Thyroid gland (tissue), 4 donors: ENCODE measurements at regions of chr1 and their contacts with region 1.

Region 1: DNA sequence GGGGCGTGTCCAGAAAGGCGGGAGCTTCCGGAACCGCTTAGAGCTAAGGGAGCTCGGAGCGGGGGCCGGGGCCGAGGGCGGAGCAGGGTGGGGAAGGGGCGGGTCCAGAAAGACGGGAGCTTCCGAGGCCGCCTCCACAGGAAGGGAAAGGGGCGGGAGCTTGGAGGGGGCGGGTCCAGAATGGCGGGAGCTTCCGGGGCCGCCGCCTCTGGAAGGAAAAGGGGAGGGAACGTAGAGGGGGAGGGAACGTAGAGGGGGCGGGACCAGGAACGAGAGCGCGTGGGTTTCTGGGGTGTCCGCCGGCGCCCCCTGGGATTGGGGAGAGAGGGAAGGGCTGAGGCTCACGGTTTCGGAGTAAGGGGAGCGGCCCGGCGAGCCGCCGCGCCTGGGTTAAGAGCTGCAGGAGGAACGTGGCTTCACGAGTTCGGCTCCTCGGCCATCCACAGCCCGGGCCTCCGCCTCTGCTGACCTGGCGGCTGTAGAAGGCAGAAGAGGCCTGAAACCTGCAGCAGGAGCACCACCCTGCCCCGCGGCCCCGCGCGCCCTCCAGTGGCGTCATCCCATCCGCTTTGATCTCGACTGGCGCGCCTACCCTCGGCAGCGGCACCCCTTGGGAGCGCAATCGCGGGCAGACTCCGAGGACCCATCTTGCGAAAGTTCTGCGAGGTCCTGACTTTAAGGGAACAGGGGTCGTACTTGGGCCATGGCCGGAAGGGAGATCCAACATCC is 22.9 kb upstream of the HPDL start:
- DNase-seq: peak; percentile 99
- H3K4me3 ChIP-seq: peak overlapping the region; percentile 16 to 49 (median 47)
- H3K27ac ChIP-seq: peak overlapping the region; percentile 85 to 88 (median 86)
- H3K4me1 ChIP-seq: peaks cover 8 to 15% of the 10 kb centered on the region in 2 donors
- H3K27me3 ChIP-seq: no peaks in the 10 kb centered on the region
- CTCF ChIP-seq: peak; percentile 22 to 77 (median 64)
- POLR2A ChIP-seq: peak in 1 of 2 donors; percentile 77

Region 2: DNA sequence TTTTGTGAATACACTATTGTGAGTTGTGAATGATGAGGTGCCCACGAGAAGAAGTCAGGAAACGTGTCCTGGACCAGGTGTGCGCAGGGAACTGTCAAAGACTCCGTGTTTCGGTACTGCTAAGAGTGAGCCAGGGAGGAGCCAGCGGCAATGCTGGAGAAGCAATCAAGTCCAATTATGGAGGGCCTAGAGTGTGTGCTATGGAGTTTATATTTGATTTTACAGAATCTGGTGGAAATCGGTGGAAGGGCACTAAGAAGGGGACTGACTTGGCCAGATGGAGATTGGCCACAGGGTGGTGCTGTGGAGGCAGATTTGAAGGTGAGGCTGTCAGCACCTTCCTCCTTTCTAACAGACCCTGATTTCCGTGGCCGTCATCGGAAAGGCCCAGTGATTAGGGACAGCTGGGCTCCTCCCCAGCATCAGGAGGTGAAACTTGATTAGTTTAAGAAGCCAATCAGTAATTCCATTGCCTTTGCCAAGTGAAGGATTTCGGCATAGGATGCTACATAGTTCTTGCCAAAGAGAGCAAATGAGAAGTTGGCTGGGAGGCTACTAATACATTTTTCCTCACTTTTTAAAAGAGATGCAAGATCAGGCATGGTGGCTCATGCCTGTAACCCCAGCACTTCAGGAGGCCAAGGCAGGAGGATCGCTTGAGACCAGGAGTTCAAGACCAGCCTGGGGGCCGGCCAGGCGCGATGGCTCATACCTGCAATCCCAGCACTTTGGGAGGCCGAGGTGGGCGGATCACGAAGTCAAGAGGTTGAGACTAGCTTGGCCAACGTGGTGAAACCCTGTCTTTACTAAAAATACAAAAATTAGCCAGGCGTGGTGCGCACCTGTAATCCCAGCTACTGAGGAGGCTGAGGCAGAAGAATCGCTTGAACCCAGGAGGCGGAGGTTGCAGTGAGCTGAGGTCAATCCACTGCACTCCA is 467.7 kb before region 1 on chr1:
- intact Hi-C with region 1: loop called (anchors 5 kb)
- DNase-seq: peak; percentile 85 to 91
- H3K4me3 ChIP-seq: no peak overlapping the region
- H3K27ac ChIP-seq: no peak overlapping the region
- H3K4me1 ChIP-seq: peaks cover 0 to 4% of the 10 kb centered on the region in 2 donors
- H3K27me3 ChIP-seq: no peaks in the 10 kb centered on the region
- CTCF ChIP-seq: peak; percentile 43 to 86 (median 79)
- POLR2A ChIP-seq: no peak

Region 3: DNA sequence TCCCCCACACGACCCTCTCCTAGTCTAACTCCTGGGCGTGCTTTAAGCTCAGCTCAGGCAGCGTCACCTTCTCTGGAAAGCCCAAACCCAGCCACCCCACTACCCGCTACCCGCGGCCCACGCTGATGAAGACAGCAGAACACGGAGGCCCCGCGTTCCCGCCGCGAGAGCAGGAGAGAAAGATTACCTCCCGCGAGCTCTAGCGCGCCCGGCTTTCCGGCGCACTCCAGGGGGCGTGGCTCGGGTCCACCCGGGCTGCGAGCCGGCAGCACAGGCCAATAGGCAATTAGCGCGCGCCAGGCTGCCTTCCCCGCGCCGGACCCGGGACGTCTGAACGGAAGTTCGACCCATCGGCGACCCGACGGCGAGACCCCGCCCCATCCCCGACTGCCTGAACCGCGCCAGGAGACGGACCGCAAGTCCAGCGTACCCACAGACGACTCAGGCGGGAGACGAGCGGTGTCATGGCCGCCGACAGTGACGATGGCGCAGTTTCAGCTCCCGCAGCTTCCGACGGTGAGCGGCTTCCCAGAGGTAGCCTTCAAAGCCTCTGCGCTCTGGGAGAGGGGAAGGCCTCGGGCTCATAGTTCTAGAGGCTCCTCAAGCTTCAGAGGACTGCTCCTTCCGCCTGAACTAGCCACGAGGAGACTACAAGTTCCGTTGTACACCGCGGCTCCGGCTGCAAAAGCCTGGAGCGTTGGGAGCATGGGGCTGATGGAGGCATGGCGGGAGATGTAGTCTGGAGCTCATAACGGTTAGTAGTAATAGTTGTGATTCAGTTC is 36.2 kb after region 1 on chr1 and contains the starts of genes MUTYH and TOE1:
- intact Hi-C with region 1: no loop called
- DNase-seq: peak; percentile 94 to 95
- H3K4me3 ChIP-seq: peak within 1 kb of the TSS; percentile 63 to 78 (median 74)
- H3K27ac ChIP-seq: peak within 1 kb of the TSS; percentile 93 to 96 (median 94)
- H3K4me1 ChIP-seq: peaks cover 18 to 23% of the 10 kb centered on the region in 2 donors
- H3K27me3 ChIP-seq: no peaks in the 10 kb centered on the region
- CTCF ChIP-seq: peak in 1 of 6 experiments; percentile 12
- POLR2A ChIP-seq: peak; percentile 20 to 78
- total RNA-seq, gene MUTYH: 23.7 to 45.9 (median 31.7) TPM
- total RNA-seq, gene TOE1: 15.7 to 19.8 (median 17.8) TPM

Region 4: GRCh38 chr1:45410850-45411314 is 107.1 kb after region 1 on chr1:
- intact Hi-C with region 1: no loop called
- DNase-seq: no peak
- H3K4me3 ChIP-seq: no peak overlapping the region
- H3K27ac ChIP-seq: no peak overlapping the region
- H3K4me1 ChIP-seq: no peaks in the 10 kb centered on the region
- H3K27me3 ChIP-seq: no peaks in the 10 kb centered on the region
- CTCF ChIP-seq: no peak
- POLR2A ChIP-seq: no peak

Region 5: GRCh38 chr1:45490626-45491486 is 187.1 kb after region 1 on chr1 and contains the start of gene TESK2:
- intact Hi-C with region 1: loop called (anchors 5 kb)
- DNase-seq: peak; percentile 98
- H3K4me3 ChIP-seq: peak within 1 kb of the TSS; percentile 63 to 71 (median 70)
- H3K27ac ChIP-seq: peak within 1 kb of the TSS; percentile 41 to 73 (median 58)
- H3K4me1 ChIP-seq: peaks cover 0 to 5% of the 10 kb centered on the region in 2 donors
- H3K27me3 ChIP-seq: no peaks in the 10 kb centered on the region
- CTCF ChIP-seq: peak in 2 of 6 experiments; percentile 3 to 46
- POLR2A ChIP-seq: peak in 1 of 2 donors; percentile 98
- total RNA-seq, gene TESK2: 4.8 to 5.7 (median 5.5) TPM